Calu3 (cell line): ENCODE measurements at regions of chr18 and their contacts with region 1.

Region 1: DNA sequence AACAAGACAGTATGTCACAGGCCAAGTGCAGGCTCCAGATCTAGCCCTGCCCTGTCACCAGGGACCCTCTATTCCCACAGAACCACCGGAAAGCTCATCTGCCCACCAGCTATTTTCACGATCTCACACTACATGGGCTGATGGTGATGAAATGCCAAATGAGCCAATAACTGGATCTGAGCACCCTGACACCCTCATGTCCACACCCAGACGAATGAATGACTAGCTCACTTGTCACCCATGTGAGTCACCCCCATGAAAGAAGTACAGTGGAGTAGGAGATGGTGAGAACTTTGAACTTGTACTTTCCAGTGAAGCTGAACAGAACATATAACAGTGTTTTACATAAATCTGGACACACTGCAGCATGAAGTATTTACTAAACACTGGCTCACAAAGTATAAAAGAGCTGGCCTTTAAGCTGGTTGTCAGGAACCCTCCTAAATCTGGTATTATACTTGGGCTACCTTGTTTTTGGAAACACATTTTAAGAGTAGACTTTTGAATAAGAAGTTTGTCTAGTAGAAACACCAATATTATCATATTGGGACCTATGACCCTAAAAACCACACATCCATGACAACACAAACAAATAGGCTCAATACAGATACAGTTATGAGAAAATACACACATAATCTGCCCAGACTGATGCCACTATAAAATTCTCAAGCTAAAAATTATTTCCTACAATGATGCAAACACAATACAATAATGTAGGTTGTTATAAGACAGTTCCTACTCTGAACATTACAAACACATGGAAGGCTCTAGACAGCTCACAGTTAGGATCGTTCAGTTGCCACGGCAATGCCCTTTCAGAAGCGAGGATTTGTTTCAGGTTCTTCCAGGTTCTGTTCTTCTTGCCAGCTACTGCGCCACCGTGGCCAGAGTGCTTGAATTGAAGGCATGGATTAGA is 19.0 kb downstream of the INO80C start:
- DNase-seq: peak; percentile 78
- H3K4me3 Mint-ChIP-seq: peak overlapping the region; percentile 72
- H3K27ac Mint-ChIP-seq: peak overlapping the region; percentile 100
- H3K4me1 Mint-ChIP-seq: peaks cover 74% of the 10 kb centered on the region
- H3K27me3 Mint-ChIP-seq: no peaks in the 10 kb centered on the region
- CTCF ChIP-seq: no peak

Region 2: DNA sequence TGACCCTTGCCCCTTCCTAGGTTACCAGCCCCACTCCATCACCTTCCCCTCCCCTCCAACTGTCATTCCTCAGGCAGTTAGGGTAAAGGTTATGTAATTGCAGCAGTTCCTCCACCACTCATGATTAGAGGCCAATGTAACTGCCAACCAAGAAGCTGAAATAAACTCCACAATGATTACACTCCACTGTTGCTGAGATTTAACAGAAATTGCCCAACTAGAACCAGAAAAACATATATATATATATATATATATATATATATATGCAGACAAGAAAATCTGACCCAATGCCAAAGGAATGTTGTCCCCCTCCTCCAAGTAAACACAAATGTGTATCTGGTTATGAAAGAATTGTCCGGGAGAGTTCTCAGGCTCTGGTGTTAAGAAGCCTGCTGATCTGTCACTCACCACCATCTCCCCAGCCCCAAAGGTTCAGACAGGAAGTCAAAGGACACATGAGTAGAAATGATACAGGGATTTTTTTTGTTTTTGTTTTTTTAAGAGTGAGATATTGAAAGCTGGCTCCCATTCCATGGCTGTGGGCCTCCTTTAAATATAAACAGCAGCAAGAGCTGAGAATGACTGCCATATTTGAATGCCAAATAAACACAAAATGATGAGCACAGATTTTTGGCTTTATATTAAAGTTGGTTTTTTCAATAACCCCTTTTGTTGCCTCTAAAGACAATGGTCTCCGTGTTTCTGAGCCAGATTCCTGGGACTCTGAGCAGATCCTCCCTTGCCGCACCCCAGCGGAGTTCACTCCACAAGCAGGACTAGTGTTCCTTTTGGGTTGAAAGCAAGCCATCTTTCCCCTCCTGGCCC is 564.7 kb before region 1 on chr18:
- CTCF ChIA-PET with region 1: no interaction called
- intact Hi-C with region 1: no loop called
- DNase-seq: no peak
- H3K4me3 Mint-ChIP-seq: no peak overlapping the region
- H3K27ac Mint-ChIP-seq: no peak overlapping the region
- H3K4me1 Mint-ChIP-seq: no peaks in the 10 kb centered on the region
- H3K27me3 Mint-ChIP-seq: no peaks in the 10 kb centered on the region
- CTCF ChIP-seq: no peak

Region 3: GRCh38 chr18:35311476-35311875 is 167.3 kb before region 1 on chr18:
- CTCF ChIA-PET with region 1: no interaction called
- intact Hi-C with region 1: no loop called
- DNase-seq: no peak
- H3K4me3 Mint-ChIP-seq: no peak overlapping the region
- H3K27ac Mint-ChIP-seq: no peak overlapping the region
- H3K4me1 Mint-ChIP-seq: no peaks in the 10 kb centered on the region
- H3K27me3 Mint-ChIP-seq: no peaks in the 10 kb centered on the region
- CTCF ChIP-seq: no peak

Region 4: DNA sequence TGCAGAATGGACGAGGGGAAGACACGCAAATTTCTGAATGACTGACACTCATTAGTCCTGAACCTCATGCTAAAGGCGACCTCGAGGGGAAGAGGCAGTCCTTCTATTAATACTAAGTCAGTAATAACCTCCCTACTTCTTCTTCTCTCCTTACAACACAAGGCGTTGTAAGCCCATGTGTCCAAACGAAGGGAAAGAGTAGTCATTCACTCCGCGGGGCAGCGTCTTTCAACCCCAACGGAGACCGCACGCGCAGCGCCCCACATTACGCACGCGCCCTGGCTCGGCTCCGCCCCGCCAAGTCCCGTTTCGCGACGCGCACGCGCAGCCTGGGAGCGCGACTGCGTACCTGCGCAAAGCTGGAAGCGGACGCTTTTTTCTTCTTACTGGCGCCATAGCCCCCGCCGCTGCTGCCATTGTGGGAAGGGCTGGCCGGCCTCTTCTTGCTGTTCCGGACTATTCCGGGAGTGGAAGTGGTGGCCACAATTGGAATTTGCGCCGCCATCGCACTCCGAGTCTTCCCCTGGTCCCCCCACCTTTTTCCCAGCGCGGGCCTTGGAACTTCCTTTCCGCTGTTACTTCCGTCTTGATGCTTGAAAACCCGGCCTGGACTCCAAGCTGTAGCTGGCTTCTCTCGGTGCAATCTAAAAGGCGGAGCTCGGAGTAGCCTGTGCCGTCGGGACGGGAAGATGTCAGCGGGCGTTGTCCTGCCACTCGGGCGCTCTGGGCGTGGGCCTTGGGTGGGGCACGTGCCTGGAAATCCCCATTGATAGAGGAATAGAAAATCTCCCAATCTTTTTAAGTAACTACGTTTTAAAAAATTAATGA is 18.8 kb after region 1 on chr18 and contains the start of gene INO80C:
- CTCF ChIA-PET with region 1: interaction called, 14 read pairs
- intact Hi-C with region 1: loop called (anchors 2 kb)
- DNase-seq: peak; percentile 91
- H3K4me3 Mint-ChIP-seq: peak within 1 kb of the TSS; percentile 83
- H3K27ac Mint-ChIP-seq: peak within 1 kb of the TSS; percentile 98
- H3K4me1 Mint-ChIP-seq: peaks cover 32% of the 10 kb centered on the region
- H3K27me3 Mint-ChIP-seq: no peaks in the 10 kb centered on the region
- CTCF ChIP-seq: no peak
- total RNA-seq, gene INO80C: 27.0 and 41.9 TPM in 2 replicates

Region 5: GRCh38 chr18:35506024-35506712 is 27.4 kb after region 1 on chr18:
- CTCF ChIA-PET with region 1: interaction called, 15 read pairs
- intact Hi-C with region 1: no loop called
- DNase-seq: no peak
- H3K4me3 Mint-ChIP-seq: no peak overlapping the region
- H3K27ac Mint-ChIP-seq: no peak overlapping the region
- H3K4me1 Mint-ChIP-seq: peaks cover 18% of the 10 kb centered on the region
- H3K27me3 Mint-ChIP-seq: no peaks in the 10 kb centered on the region
- CTCF ChIP-seq: no peak

Region 6: DNA sequence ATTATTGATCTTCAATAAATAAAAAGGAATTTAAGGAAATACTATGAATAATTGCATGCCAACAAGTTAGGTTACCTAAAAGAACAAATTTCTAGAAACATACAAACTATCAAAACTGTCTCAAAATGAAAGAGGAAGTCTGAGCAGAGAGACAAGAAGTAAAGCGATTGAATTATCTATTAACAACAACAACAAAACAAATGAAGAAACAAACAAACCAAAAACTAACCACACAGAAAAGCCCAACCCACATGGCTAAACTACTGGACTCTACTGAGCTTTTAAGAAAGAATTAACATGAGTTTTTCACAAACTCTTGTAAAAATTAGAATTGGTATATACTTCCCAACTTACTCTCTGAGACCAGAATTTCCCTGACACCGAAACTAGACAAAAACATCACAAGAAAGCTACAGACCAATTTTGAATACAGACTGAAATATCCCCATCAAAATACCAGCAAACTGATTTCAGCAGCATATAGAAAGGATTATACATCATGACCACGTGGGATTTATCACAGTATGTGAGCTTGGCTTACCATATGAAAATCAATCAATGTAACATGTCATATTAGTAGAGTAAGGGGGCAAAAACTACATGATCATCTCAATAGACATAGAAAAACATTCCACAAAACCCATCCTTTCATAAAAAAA is 86.1 kb after region 1 on chr18:
- CTCF ChIA-PET with region 1: no interaction called
- intact Hi-C with region 1: no loop called
- DNase-seq: no peak
- H3K4me3 Mint-ChIP-seq: no peak overlapping the region
- H3K27ac Mint-ChIP-seq: no peak overlapping the region
- H3K4me1 Mint-ChIP-seq: no peaks in the 10 kb centered on the region
- H3K27me3 Mint-ChIP-seq: no peaks in the 10 kb centered on the region
- CTCF ChIP-seq: no peak